Mucosa of descending colon (tissue), 3 donors: ENCODE measurements at regions of chr2 and their contacts with region 1.

Region 1: DNA sequence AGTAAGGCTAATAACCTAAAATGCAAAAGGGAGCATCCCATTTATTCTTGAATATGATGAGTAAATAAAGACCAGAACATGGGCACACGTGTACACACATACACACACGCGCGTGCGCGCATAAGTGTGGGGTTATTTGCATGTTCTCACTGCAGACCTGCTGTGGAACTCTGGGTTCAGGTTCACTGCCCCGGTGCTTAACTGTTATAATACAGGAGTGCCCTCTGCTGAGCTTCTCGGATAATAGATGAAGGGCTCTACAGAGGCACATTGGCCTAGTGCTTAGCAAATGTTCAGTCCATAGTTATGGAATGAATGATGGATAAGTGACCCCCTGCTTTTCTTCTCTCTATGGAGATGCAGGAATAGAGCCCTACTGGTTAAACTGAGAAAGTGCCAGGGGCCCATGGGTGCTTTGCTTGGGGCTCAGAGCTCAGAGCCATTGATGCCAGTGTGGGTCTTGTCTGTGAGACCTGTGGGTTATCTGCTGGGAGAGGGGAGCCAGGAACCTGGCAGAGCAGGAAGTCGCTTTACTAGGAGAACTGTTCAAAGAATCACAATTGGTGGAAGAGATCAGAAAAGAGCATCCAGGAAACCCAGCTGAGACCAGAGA is 3.6 kb upstream of the ARL4C start:
- DNase-seq: peak; percentile 54 to 81 (median 76)
- ATAC-seq: peak; percentile 65
- H3K4me3 ChIP-seq: no peak overlapping the region
- H3K4me1 ChIP-seq: peaks cover 10% of the 10 kb centered on the region
- CTCF ChIP-seq: no peak

Region 2: GRCh38 chr2:234135720-234136221 is 364.7 kb before region 1 on chr2:
- intact Hi-C with region 1: loop called (anchors 2 to 5 kb)
- DNase-seq: peak; percentile 51 to 68 (median 56)
- ATAC-seq: peak; percentile 90
- H3K4me3 ChIP-seq: no peak overlapping the region
- H3K4me1 ChIP-seq: no peaks in the 10 kb centered on the region
- CTCF ChIP-seq: no peak

Region 3: DNA sequence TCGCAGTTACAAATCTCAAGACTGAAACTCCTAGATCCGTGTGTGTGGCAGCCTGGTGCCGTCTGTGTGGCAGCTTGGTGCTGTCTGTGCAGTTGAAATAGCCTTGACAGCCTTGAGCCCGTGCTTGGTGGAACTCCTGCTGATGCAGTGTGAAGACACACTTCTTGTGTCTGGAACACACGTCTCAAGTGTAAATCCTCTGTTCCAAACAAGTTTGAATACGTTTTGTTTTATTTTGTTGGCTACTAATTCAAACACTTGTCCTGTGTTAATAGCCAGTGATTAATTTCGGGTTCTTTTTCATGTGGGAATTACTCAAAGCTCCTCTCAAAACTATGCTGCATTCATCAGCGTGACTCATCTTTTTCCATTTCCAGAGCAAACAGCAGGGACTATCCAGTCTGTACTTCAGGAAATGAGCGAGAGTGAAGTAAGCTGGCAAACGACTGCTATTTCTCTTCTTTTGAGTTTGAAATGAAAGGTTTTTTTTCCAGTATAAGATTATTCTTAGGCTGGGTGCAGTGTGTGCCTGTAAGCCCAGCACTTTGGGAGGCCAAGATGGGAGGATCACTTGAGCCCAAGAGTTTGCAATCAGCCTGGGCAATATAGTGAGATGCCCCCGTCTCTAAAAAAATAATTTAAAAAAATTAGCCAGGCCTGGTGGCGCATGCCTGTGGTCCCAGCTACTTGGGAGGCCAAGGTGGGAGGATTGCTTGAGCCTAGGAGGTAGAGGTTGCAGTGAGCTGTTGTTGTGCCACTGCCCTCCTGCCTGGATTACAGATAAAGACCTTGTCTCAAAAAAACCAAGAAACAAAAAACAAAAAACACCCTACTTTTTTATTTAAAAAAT is 297.1 kb before region 1 on chr2:
- intact Hi-C with region 1: no loop called
- DNase-seq: peak in 1 of 3 donors; percentile 7
- ATAC-seq: peak; percentile 44
- H3K4me3 ChIP-seq: no peak overlapping the region
- H3K4me1 ChIP-seq: no peaks in the 10 kb centered on the region
- CTCF ChIP-seq: no peak

Region 4: GRCh38 chr2:234437642-234438304 is 62.7 kb before region 1 on chr2:
- intact Hi-C with region 1: no loop called
- DNase-seq: no peak
- ATAC-seq: no peak
- H3K4me3 ChIP-seq: no peak overlapping the region
- H3K4me1 ChIP-seq: no peaks in the 10 kb centered on the region
- CTCF ChIP-seq: no peak

Region 5: DNA sequence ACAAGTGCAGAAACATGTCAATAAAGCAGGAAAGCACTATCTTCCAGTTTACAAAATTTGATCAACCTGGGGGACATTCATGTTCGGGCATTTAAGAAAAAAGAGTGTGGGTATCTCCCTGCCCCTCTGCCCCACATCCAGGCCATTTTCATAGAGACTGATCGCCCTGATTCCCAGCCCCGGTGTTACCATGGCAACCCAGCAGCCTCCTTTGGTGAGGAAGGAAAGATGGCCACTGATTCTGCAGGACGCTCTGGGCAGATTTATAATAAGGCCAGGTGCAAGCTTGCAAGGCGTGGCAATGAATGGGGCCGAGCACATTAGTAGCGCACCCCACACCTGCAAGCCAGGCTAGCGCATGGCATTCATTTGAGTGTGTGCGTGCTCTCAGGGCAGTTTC is 33.1 kb after region 1 on chr2:
- intact Hi-C with region 1: no loop called
- DNase-seq: no peak
- ATAC-seq: no peak
- H3K4me3 ChIP-seq: no peak overlapping the region
- H3K4me1 ChIP-seq: no peaks in the 10 kb centered on the region
- CTCF ChIP-seq: no peak

Region 6: DNA sequence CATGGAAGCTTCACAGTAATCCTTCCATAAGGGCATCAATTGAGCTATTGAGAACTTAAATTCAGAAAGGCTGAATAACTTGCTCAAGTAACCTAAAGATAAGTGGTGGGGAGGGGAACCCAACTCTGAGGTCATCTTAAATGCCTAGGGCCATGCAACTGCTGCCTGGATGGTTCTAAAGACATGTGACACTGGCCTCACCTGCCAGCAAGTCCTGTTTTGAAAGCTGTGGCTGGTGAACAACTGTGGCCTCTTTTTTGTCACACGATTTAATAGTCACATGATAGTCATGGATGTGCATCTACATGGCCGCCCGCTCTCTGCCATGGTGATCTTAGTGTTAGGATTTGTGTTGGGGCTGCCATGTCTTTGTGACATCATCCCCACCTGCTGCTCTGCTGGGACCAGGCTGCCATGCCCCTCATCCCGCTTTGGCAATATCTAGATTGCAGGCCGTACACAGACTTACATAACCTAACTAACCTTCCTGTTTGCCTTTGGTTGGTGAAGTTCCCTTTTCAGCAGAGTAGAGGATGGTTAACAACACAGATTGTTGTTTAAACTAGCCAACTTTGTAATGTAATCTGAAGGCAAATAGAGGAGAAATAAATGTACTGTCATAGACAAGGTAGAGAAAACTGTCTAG is 273.4 kb after region 1 on chr2:
- intact Hi-C with region 1: no loop called
- DNase-seq: no peak
- ATAC-seq: no peak
- H3K4me3 ChIP-seq: no peak overlapping the region
- H3K4me1 ChIP-seq: no peaks in the 10 kb centered on the region
- CTCF ChIP-seq: no peak